GM12878 (cell line): ENCODE measurements at regions of chr1 and their contacts with region 1.

Region 1: DNA sequence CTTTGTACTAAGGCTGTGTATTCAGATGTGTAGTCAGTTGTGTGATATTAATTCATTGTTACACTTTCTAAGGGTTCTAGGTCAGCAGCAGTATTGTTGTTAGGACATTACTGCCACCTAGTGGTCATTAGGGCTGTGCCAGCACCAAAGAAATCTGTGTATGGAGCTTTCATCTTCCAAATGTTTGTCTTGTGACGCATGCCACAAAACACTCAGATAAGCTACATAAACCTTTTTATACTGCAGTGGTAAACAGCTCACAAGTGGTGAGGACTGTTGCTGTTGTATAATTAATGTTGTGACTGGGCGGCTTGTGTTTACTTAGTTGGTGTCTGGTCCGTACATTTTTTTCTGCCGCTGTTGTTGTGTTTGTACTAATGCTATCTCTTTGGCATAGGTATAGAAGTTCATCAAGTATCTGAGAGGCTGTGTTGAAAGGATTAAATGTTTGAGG is 51.7 kb downstream of the S1PR1 start:
- DNase-seq: peak; percentile 69
- ATAC-seq: peak; percentile 71
- H3K4me3 ChIP-seq: no peak overlapping the region
- H3K27ac ChIP-seq: no peak overlapping the region
- H3K4me1 ChIP-seq: peaks cover 35% of the 10 kb centered on the region
- H3K27me3 ChIP-seq: no peaks in the 10 kb centered on the region
- CTCF ChIP-seq: peak; percentile 79 to 92 (median 90)
- EP300 ChIP-seq: no peak
- POLR2A ChIP-seq: no peak
- RAD21 ChIP-seq: peak; percentile 96

Region 2: DNA sequence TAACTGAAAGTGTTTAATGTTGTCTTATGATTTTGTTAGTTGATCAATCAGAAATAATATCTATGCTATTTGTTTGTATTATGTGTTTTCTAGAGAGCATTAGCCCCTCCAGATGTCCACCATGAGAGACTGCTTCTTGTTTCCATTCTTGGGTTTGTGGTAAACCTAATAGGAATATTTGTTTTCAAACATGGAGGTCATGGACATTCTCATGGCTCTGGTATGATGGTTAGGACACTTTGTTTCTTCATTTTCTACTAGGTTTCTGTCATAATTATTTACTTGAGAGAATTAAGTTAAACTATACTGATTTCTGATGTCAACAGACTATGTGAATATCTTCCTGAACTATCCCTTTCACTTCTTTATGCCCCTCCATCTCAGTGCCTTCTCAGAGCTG is 376.5 kb before region 1 on chr1:
- CTCF ChIA-PET with region 1: interaction called, 63 read pairs
- POLR2A ChIA-PET with region 1: no interaction called
- RAD21 ChIA-PET with region 1: interaction called, 6 read pairs
- SMC1A ChIA-PET with region 1: interaction called, 14 read pairs
- in situ Hi-C with region 1: loop called (anchors 5 kb)
- intact Hi-C with region 1: no loop called
- DNase-seq: no peak
- ATAC-seq: no peak
- H3K4me3 ChIP-seq: no peak overlapping the region
- H3K27ac ChIP-seq: no peak overlapping the region
- H3K4me1 ChIP-seq: no peaks in the 10 kb centered on the region
- H3K27me3 ChIP-seq: no peaks in the 10 kb centered on the region
- CTCF ChIP-seq: no peak
- EP300 ChIP-seq: no peak
- POLR2A ChIP-seq: no peak
- RAD21 ChIP-seq: no peak

Region 3: GRCh38 chr1:101004670-101005069 is 283.8 kb before region 1 on chr1:
- CTCF ChIA-PET with region 1: interaction called, 4 read pairs
- POLR2A ChIA-PET with region 1: no interaction called
- RAD21 ChIA-PET with region 1: interaction called, 3 read pairs
- SMC1A ChIA-PET with region 1: interaction called, 4 read pairs
- in situ Hi-C with region 1: no loop called
- intact Hi-C with region 1: loop called (anchors 5 kb)
- DNase-seq: no peak
- ATAC-seq: no peak
- H3K4me3 ChIP-seq: no peak overlapping the region
- H3K27ac ChIP-seq: no peak overlapping the region
- H3K4me1 ChIP-seq: peaks cover 11% of the 10 kb centered on the region; the same call in 1 of the 2 replicates
- H3K27me3 ChIP-seq: no peaks in the 10 kb centered on the region
- CTCF ChIP-seq: no peak
- EP300 ChIP-seq: no peak
- POLR2A ChIP-seq: no peak
- RAD21 ChIP-seq: no peak

Region 4: DNA sequence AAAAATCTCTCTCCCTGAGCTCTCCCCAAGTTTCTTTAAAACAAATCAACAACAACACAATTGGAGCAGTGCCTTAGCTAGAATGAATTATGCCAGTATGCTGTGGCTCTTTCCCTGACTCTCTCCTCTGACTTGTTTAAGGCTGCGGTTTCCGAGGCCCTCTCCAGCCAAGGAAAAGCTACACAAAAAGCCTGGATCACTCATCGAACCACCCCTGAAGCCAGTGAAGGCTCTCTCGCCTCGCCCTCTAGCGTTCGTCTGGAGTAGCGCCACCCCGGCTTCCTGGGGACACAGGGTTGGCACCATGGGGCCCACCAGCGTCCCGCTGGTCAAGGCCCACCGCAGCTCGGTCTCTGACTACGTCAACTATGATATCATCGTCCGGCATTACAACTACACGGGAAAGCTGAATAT is 49.8 kb before region 1 on chr1:
- CTCF ChIA-PET with region 1: interaction called, 86 read pairs
- POLR2A ChIA-PET with region 1: interaction called, 3 read pairs
- RAD21 ChIA-PET with region 1: interaction called, 46 read pairs
- SMC1A ChIA-PET with region 1: interaction called, 46 read pairs
- in situ Hi-C with region 1: no loop called
- intact Hi-C with region 1: loop called (anchors 2 kb)
- DNase-seq: no peak
- ATAC-seq: peak; percentile 70
- H3K4me3 ChIP-seq: peak overlapping the region; percentile 81
- H3K27ac ChIP-seq: peak overlapping the region; percentile 43
- H3K4me1 ChIP-seq: peaks cover 32% of the 10 kb centered on the region
- H3K27me3 ChIP-seq: no peaks in the 10 kb centered on the region
- CTCF ChIP-seq: peak; percentile 90 to 99 (median 97)
- EP300 ChIP-seq: no peak
- POLR2A ChIP-seq: 0 out of 2 replicates have a peak, but pooled peaks have one; percentile 9
- RAD21 ChIP-seq: peak; percentile 89

Region 5: DNA sequence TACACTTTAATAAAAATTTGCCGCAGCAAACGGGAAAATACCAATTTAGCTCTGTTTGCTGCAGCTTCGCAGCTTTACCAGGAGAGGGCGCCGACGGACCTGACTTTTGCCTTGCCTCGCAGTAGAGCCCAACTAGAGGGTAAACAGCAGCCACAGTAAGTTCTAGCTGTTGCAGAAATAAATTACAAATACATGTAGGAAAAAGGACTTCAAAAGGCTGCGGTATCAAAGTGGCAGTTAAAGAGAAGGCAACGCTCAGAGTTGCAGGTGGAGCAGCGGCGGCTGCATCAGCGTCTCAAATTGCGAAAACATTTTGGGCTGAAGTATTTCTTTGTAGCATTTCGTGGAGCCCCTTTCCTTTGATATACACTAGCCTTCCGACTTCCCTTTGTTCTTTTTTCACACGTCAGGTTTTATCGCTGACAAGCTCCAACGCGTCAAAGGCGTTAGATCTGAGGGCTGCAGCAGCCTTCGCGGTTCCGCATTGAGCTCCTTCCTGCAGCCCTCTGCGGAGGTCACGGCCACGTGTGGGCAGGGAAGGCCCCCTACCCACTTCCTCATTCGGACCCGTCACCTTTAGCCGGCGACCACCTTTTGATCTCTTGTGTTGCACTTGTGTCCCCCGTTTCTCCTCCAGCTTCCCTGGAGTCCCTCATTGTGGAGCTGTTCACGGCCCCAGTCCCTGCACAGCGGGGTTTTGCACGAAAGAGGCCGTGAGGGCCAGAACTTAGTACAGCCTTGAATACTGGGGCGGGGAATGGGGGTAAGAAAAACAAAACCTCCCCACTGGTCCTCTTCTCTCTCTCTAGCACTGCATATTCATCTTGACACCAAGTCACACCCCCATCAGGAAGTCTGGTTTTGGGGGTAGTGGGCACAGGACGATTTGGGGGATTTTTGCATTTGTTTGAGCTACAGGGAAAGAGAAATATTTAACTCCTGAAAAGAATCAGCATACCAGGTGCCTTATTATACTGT is 21.1 kb after region 1 on chr1:
- CTCF ChIA-PET with region 1: interaction called, 166 read pairs
- POLR2A ChIA-PET with region 1: interaction called, 8 read pairs
- RAD21 ChIA-PET with region 1: interaction called, 171 read pairs
- SMC1A ChIA-PET with region 1: interaction called, 275 read pairs
- in situ Hi-C with region 1: no loop called
- intact Hi-C with region 1: loop called (anchors 2 kb)
- DNase-seq: no peak
- ATAC-seq: peak; percentile 79
- H3K4me3 ChIP-seq: peak overlapping the region; percentile 50
- H3K27ac ChIP-seq: peak overlapping the region; percentile 93
- H3K4me1 ChIP-seq: peaks cover 56% of the 10 kb centered on the region
- H3K27me3 ChIP-seq: no peaks in the 10 kb centered on the region
- CTCF ChIP-seq: peak; percentile 88 to 93 (median 92)
- EP300 ChIP-seq: peak; percentile 70 to 88; a peak in 3 of 4 replicates
- POLR2A ChIP-seq: peak; percentile 82
- RAD21 ChIP-seq: peak; percentile 88

Region 6: DNA sequence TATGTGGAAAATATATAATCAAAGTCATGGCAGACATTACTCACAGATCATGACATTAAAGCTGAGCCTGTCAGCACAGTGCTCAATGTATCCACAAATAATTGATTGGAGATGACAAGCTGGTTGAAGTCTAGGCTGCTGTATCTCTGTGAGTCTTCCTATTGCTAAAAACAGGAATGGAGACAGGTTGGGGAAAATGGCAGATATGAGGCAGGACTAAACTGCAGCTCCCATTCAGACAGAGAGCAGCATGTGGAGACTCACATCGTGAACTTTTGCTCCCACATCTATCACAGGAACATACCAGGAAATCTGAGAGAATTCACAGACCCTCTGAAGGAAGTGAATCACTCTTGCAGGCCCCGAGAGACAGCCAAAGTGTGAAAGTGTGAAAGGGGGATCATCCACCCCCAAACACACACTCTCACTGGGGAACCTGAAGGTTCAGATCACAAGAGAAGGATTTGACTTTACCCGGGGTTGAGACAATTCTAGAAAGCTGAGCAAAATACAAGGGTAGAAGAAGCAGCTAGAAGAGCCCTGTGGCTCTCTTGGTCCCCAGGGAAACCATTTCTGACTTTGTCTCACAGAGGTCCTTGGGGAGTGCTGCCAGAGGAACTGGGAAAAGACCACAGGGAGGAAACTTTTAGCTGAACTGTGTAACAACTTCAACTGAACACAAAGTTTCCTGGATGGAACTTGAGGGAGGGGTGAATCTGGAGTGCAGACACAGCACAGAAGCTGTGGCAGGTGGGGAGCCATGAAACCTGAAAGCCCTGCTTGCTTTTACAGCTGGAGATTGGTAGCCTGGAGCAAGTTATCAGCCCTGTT is 121.7 kb after region 1 on chr1:
- CTCF ChIA-PET with region 1: interaction called, 15 read pairs
- POLR2A ChIA-PET with region 1: interaction called, 7 read pairs
- RAD21 ChIA-PET with region 1: interaction called, 117 read pairs
- SMC1A ChIA-PET with region 1: interaction called, 107 read pairs
- in situ Hi-C with region 1: no loop called
- intact Hi-C with region 1: loop called (anchors 1 kb)
- DNase-seq: peak; percentile 99
- ATAC-seq: peak; percentile 64
- H3K4me3 ChIP-seq: no peak overlapping the region
- H3K27ac ChIP-seq: peak overlapping the region; percentile 98
- H3K4me1 ChIP-seq: peaks cover 51% of the 10 kb centered on the region
- H3K27me3 ChIP-seq: no peaks in the 10 kb centered on the region
- CTCF ChIP-seq: no peak
- EP300 ChIP-seq: peak in 1 of 2 experiments; percentile 67; a peak in 1 of 4 replicates
- POLR2A ChIP-seq: peak; percentile 59
- RAD21 ChIP-seq: peak; percentile 42; the same call in 1 of the 2 replicates